ENCODE measurements at regions of chr19 and their contacts with region 1.

Region 1: DNA sequence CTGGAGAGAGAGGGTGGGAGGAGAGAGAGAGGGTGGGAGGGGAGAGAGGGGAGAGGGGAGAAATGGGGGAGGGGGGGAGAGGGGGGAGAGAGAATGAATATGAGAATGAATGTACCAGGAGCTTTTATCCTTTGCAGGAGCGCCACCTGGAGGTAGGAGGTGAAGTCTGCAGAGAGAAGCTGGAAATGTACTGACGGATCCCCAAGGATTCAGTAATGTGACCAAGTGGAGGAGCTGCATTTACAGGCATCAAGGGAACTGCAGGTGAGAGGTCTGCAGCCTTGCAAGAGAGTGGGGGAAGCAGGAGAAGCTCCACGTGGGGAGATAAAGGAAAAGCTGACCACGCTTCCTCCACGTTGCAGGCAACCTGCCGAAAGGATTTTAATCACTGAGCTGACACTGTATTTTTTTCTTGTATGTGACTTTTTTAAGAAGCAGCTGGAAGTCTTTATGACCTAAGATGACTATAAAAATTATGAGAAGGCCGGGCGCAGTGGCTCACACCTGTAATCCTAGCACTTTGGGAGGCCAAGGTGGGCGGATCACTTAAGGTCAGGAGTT is 33.7 kb downstream of the VSTM1 start:
- DNase-seq: no peak
- ATAC-seq: no peak
- H3K4me3 Mint-ChIP-seq: no peak overlapping the region
- H3K27ac Mint-ChIP-seq: no peak overlapping the region
- H3K4me1 Mint-ChIP-seq: no peaks in the 10 kb centered on the region
- H3K27me3 Mint-ChIP-seq: peaks cover 9% of the 10 kb centered on the region
- CTCF ChIP-seq: no peak

Region 2: GRCh38 chr19:53424968-53425597 is 604.9 kb before region 1 on chr19:
- CTCF ChIA-PET with region 1: no interaction called
- POLR2A ChIA-PET with region 1: no interaction called
- intact Hi-C with region 1: loop called (anchors 10 kb)
- DNase-seq: peak; percentile 31
- ATAC-seq: peak; percentile 90
- H3K4me3 Mint-ChIP-seq: no peak overlapping the region
- H3K27ac Mint-ChIP-seq: no peak overlapping the region
- H3K4me1 Mint-ChIP-seq: peaks cover 3% of the 10 kb centered on the region
- H3K27me3 Mint-ChIP-seq: no peaks in the 10 kb centered on the region
- CTCF ChIP-seq: no peak

Region 3: DNA sequence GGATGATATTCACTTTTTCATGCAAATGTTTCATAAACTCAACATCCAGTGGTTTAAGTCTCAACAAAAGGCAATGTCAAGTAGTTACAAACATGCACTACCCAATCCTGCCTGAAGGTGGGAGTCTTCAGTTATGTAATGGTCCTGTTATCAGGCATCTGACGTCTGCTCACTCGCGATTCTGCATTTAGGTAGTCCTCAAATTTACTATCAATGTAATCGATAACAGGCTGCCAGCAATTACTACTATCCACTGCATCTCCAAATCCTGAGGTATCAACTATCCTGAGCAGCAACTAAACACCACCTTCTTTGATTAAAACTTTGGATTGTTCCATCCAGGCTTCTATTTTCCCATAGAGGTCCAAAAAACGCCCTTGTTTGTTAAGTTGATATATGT is 257.1 kb before region 1 on chr19:
- CTCF ChIA-PET with region 1: interaction called, 4 read pairs
- POLR2A ChIA-PET with region 1: no interaction called
- intact Hi-C with region 1: loop called (anchors 1 kb)
- DNase-seq: no peak
- ATAC-seq: peak; percentile 25
- H3K4me3 Mint-ChIP-seq: no peak overlapping the region
- H3K27ac Mint-ChIP-seq: no peak overlapping the region
- H3K4me1 Mint-ChIP-seq: peaks cover 2% of the 10 kb centered on the region
- H3K27me3 Mint-ChIP-seq: no peaks in the 10 kb centered on the region
- CTCF ChIP-seq: peak; percentile 26

Region 4: GRCh38 chr19:53792721-53793433 is 237.1 kb before region 1 on chr19:
- CTCF ChIA-PET with region 1: interaction called, 19 read pairs
- POLR2A ChIA-PET with region 1: no interaction called
- intact Hi-C with region 1: no loop called
- DNase-seq: peak; percentile 45
- ATAC-seq: peak; percentile 98
- H3K4me3 Mint-ChIP-seq: no peak overlapping the region
- H3K27ac Mint-ChIP-seq: no peak overlapping the region
- H3K4me1 Mint-ChIP-seq: no peaks in the 10 kb centered on the region
- H3K27me3 Mint-ChIP-seq: peaks cover 1% of the 10 kb centered on the region
- CTCF ChIP-seq: peak; percentile 81

Region 5: GRCh38 chr19:53992815-53993214 is 37.2 kb before region 1 on chr19:
- CTCF ChIA-PET with region 1: no interaction called
- POLR2A ChIA-PET with region 1: interaction called, 12 read pairs
- intact Hi-C with region 1: no loop called
- DNase-seq: no peak
- ATAC-seq: no peak
- H3K4me3 Mint-ChIP-seq: no peak overlapping the region
- H3K27ac Mint-ChIP-seq: no peak overlapping the region
- H3K4me1 Mint-ChIP-seq: no peaks in the 10 kb centered on the region
- H3K27me3 Mint-ChIP-seq: peaks cover 32% of the 10 kb centered on the region
- CTCF ChIP-seq: no peak

Measured in activated B cell treated with CpG ODN at 0.5 μM for 24 hours (primary cell).